HCT116 (cell line): ENCODE measurements at regions of chr1 and their contacts with region 1.

Region 1: DNA sequence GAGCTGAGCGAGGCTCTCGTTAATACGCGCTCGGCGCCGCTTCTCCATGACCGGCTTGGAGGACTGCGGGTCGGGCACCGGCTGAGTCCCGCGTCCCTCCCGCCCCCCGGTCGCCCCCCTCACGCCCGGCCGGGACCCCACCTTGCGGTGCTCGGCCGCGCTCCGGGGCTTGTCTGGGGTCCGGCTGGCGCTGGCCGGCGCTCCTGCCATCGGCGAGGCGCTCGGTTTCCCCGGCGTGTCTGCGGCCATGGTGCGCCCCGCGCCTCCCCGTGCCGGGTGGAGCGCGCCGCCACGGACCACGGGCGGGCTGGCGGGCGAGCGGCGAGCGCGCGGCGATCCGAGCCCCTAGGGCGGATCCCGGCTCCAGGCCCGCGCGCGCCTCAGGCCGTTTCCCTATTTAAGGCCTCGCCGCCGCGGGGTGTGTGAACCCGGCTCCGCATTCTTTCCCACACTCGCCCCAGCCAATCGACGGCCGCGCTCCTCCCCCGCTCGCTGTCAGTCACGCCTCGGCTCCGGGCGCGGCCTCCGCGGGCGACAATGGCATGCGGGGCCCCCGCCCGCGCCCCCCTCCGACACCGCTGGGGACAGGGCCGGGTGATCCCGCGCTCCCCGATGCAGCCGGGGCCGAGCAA is at the start of gene HES4:
- DNase-seq: peak; percentile 84
- ATAC-seq: peak; percentile 67
- H3K4me3 ChIP-seq: peak within 1 kb of the TSS; percentile 75 to 83
- H3K27ac ChIP-seq: peak within 1 kb of the TSS; percentile 99
- H3K4me1 ChIP-seq: peaks cover 15 to 66% of the 10 kb centered on the region in 2 experiments
- H3K27me3 ChIP-seq: no peaks in the 10 kb centered on the region
- CTCF ChIP-seq: no peak
- POLR2A ChIP-seq: peak; percentile 69
- RAD21 ChIP-seq: no peak
- total RNA-seq, gene HES4: 145 TPM

Region 2: DNA sequence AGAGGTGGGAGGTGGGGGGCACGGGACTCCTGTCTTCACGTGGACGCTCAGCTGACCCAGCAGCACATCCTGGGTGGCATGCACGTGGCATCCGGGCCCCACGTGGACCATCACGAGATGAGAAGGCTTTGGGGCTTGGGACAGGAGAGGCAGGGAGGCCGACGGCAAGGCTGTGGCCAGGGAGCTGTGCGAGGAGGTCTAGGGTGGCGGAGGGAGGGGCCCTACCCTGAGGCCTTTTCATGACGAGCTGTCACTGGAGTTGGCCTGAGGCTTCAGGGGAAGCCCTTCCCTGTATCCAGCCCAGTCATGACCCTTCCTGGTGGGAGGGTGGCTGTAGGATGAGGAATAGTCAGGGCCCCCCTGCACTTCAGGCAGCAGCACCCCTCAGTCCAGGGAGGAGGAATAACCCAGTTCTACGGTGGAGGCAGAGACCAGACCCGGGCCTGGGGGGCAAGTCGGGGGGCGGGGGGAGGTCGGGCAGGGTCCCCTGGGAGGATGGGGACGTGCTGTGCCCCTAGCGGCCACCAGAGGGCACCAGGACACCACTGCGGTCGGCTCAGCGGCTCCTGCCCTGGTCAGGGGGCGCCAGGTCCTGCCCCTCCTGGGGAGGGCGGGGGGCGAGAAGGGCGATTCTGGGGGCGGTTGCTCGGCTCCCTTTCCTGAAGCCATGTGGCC is 15.9 kb before region 1 on chr1:
- CTCF ChIA-PET with region 1: interaction called, 4 read pairs
- POLR2A ChIA-PET with region 1: interaction called, 3 read pairs
- RAD21 ChIA-PET with region 1: interaction called in 1 of 2 experiments, 3 read pairs
- intact Hi-C with region 1: loop called (anchors 2 kb)
- DNase-seq: no peak
- ATAC-seq: peak; percentile 86
- H3K4me3 ChIP-seq: no peak overlapping the region
- H3K27ac ChIP-seq: no peak overlapping the region
- H3K4me1 ChIP-seq: 0 out of 4 replicates have a peak, but pooled peaks cover 0 to 2% of the 10 kb centered on the region in 2 experiments
- H3K27me3 ChIP-seq: no peaks in the 10 kb centered on the region
- CTCF ChIP-seq: peak; percentile 59 to 74 (median 69); a peak in 5 of 6 replicates
- POLR2A ChIP-seq: no peak
- RAD21 ChIP-seq: peak; percentile 86

Region 3: GRCh38 chr1:1013105-1013921 is 13.5 kb after region 1 on chr1 and contains the start of gene ISG15:
- CTCF ChIA-PET with region 1: interaction called, 26 read pairs
- POLR2A ChIA-PET with region 1: interaction called, 12 read pairs
- RAD21 ChIA-PET with region 1: no interaction called
- intact Hi-C with region 1: no loop called
- DNase-seq: peak; percentile 60
- ATAC-seq: peak; percentile 75
- H3K4me3 ChIP-seq: peak within 1 kb of the TSS; percentile 80 to 90
- H3K27ac ChIP-seq: peak within 1 kb of the TSS; percentile 73
- H3K4me1 ChIP-seq: peaks cover 22 to 44% of the 10 kb centered on the region in 2 experiments
- H3K27me3 ChIP-seq: no peaks in the 10 kb centered on the region
- CTCF ChIP-seq: no peak
- POLR2A ChIP-seq: peak; percentile 49
- RAD21 ChIP-seq: no peak
- total RNA-seq, gene ISG15: 140 TPM

Region 4: GRCh38 chr1:1019122-1019999 is 19.5 kb after region 1 on chr1:
- CTCF ChIA-PET with region 1: interaction called, 26 read pairs
- POLR2A ChIA-PET with region 1: interaction called, 12 read pairs
- RAD21 ChIA-PET with region 1: no interaction called
- intact Hi-C with region 1: no loop called
- DNase-seq: peak; percentile 61
- ATAC-seq: peak; percentile 74
- H3K4me3 ChIP-seq: peak overlapping the region; percentile 5 to 46; a peak in 2 of 4 replicates
- H3K27ac ChIP-seq: peak overlapping the region; percentile 62
- H3K4me1 ChIP-seq: peaks cover 44 to 67% of the 10 kb centered on the region in 2 experiments
- H3K27me3 ChIP-seq: no peaks in the 10 kb centered on the region
- CTCF ChIP-seq: peak in 2 of 3 experiments; percentile 36 to 40; a peak in 4 of 6 replicates
- POLR2A ChIP-seq: no peak
- RAD21 ChIP-seq: no peak

Region 5: DNA sequence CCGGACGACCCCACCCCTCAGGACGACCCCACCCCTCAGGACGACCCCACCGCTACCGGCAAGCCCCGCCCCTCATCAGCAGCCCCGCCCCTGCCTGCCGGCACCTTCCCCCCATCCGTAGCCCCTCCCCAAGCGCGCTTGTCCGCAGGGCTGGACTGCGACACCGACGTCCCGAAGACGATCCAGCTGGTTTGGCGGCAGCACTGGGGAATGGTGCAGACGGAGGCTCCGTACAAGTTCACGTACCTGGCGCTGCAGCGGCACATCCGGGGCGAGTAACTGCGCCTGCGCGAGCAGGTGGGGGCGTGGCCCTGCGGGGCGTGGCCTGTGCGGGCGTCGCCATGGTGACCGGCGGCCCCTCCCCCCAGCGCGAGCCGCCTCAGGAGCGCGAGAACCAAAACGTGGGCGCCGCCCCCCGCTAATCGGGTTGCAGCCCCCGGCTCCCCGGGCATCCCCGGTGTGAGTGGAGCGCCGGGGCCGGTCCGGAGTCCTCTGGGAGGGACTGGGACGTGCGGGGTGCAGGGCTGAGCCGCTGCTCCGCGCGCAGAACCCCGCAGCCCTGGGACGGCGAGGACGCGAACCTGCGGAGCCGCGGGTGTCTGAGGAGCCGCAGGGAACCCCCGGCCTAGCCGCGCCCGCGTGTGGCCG is 69.3 kb after region 1 on chr1:
- CTCF ChIA-PET with region 1: interaction called, 5 read pairs
- POLR2A ChIA-PET with region 1: no interaction called
- RAD21 ChIA-PET with region 1: no interaction called
- intact Hi-C with region 1: loop called (anchors 5 kb)
- DNase-seq: peak; percentile 65
- ATAC-seq: peak; percentile 61
- H3K4me3 ChIP-seq: peak overlapping the region; percentile 50 to 64
- H3K27ac ChIP-seq: peak overlapping the region; percentile 79
- H3K4me1 ChIP-seq: peaks cover 36 to 64% of the 10 kb centered on the region in 2 experiments
- H3K27me3 ChIP-seq: no peaks in the 10 kb centered on the region
- CTCF ChIP-seq: no peak
- POLR2A ChIP-seq: no peak
- RAD21 ChIP-seq: no peak

Region 6: GRCh38 chr1:1185101-1185765 is 185.4 kb after region 1 on chr1:
- CTCF ChIA-PET with region 1: no interaction called
- POLR2A ChIA-PET with region 1: no interaction called
- RAD21 ChIA-PET with region 1: no interaction called
- intact Hi-C with region 1: no loop called
- DNase-seq: no peak
- ATAC-seq: no peak
- H3K4me3 ChIP-seq: no peak overlapping the region
- H3K27ac ChIP-seq: no peak overlapping the region
- H3K4me1 ChIP-seq: peaks cover 0 to 13% of the 10 kb centered on the region in 2 experiments; a peak in 2 of 4 replicates
- H3K27me3 ChIP-seq: no peaks in the 10 kb centered on the region
- CTCF ChIP-seq: no peak
- POLR2A ChIP-seq: no peak
- RAD21 ChIP-seq: no peak